ENCODE measurements at regions of chr12 and their contacts with region 1.

Region 1: GRCh38 chr12:105357162-105357691 is 26.7 kb downstream of the C12orf75 start:
- DNase-seq: no peak
- ATAC-seq: no peak
- H3K4me3 ChIP-seq: no peak overlapping the region
- H3K27ac ChIP-seq: peak overlapping the region; percentile 24; the same call in 1 of the 2 replicates
- H3K4me1 ChIP-seq: peaks cover 12% of the 10 kb centered on the region
- H3K27me3 ChIP-seq: no peaks in the 10 kb centered on the region
- CTCF ChIP-seq: no peak

Region 2: DNA sequence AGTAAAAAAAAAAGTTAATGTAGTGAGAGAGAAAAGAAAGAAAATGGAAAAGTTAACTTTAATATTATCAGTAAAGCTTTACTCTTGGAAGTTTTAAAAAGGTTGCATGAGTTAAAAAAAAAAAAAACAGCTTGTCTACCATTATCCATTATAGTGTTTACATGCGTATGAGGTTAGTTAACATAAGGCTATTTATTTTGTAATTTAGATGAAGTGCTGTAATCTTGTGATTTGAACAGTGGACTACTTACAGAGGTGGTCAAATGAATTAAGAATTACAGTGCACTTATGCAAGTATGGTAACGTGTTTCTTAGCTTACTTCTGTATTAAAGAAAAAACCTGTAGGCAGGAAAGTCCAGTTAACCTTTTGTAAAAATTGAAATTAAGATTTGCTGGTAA is 219.0 kb before region 1 on chr12:
- CTCF ChIA-PET with region 1: no interaction called
- POLR2A ChIA-PET with region 1: no interaction called
- in situ Hi-C with region 1: no loop called
- intact Hi-C with region 1: loop called (anchors 10 kb)
- DNase-seq: no peak
- ATAC-seq: no peak
- H3K4me3 ChIP-seq: no peak overlapping the region
- H3K27ac ChIP-seq: no peak overlapping the region
- H3K4me1 ChIP-seq: no peaks in the 10 kb centered on the region
- H3K27me3 ChIP-seq: no peaks in the 10 kb centered on the region
- CTCF ChIP-seq: no peak

Region 3: GRCh38 chr12:105445249-105446015 is 88.2 kb after region 1 on chr12:
- CTCF ChIA-PET with region 1: no interaction called
- POLR2A ChIA-PET with region 1: interaction called, 12 read pairs
- in situ Hi-C with region 1: no loop called
- intact Hi-C with region 1: no loop called
- DNase-seq: no peak
- ATAC-seq: peak; percentile 91
- H3K4me3 ChIP-seq: no peak overlapping the region
- H3K27ac ChIP-seq: peak overlapping the region; percentile 74
- H3K4me1 ChIP-seq: peaks cover 13% of the 10 kb centered on the region
- H3K27me3 ChIP-seq: no peaks in the 10 kb centered on the region
- CTCF ChIP-seq: no peak

Region 4: GRCh38 chr12:105761075-105761474 is 403.8 kb after region 1 on chr12:
- CTCF ChIA-PET with region 1: no interaction called
- POLR2A ChIA-PET with region 1: no interaction called
- in situ Hi-C with region 1: no loop called
- intact Hi-C with region 1: no loop called
- DNase-seq: no peak
- ATAC-seq: no peak
- H3K4me3 ChIP-seq: no peak overlapping the region
- H3K27ac ChIP-seq: no peak overlapping the region
- H3K4me1 ChIP-seq: peaks cover 4% of the 10 kb centered on the region; the same call in 1 of the 2 replicates
- H3K27me3 ChIP-seq: no peaks in the 10 kb centered on the region
- CTCF ChIP-seq: no peak

Measured in Panc1 (cell line).